GM12878 (cell line): ENCODE measurements at regions of chr1 and their contacts with region 1.

Region 1: GRCh38 chr1:236281654-236282424 is at the start of gene ERO1B:
- DNase-seq: peak; percentile 73
- ATAC-seq: peak; percentile 86
- H3K4me3 ChIP-seq: peak within 1 kb of the TSS; percentile 85
- H3K27ac ChIP-seq: peak within 1 kb of the TSS; percentile 88
- H3K4me1 ChIP-seq: peaks cover 33% of the 10 kb centered on the region
- H3K27me3 ChIP-seq: no peaks in the 10 kb centered on the region
- CTCF ChIP-seq: no peak
- EP300 ChIP-seq: no peak
- POLR2A ChIP-seq: peak; percentile 99
- RAD21 ChIP-seq: no peak
- polyA plus RNA-seq, gene ERO1B: 9.0 to 9.6 TPM

Region 2: GRCh38 chr1:236142253-236143103 is 139.4 kb before region 1 on chr1 and contains the start of gene GPR137B:
- CTCF ChIA-PET with region 1: interaction called, 5 read pairs
- POLR2A ChIA-PET with region 1: interaction called, 6 read pairs
- RAD21 ChIA-PET with region 1: interaction called, 3 read pairs
- SMC1A ChIA-PET with region 1: interaction called, 5 read pairs
- in situ Hi-C with region 1: no loop called
- intact Hi-C with region 1: loop called (anchors 5 kb)
- DNase-seq: no peak
- ATAC-seq: peak; percentile 61
- H3K4me3 ChIP-seq: peak within 1 kb of the TSS; percentile 84
- H3K27ac ChIP-seq: peak within 1 kb of the TSS; percentile 62
- H3K4me1 ChIP-seq: peaks cover 17% of the 10 kb centered on the region
- H3K27me3 ChIP-seq: peaks cover 1 to 13% of the 10 kb centered on the region in 2 experiments
- CTCF ChIP-seq: no peak
- EP300 ChIP-seq: no peak
- POLR2A ChIP-seq: peak; percentile 63
- RAD21 ChIP-seq: no peak
- polyA plus RNA-seq, gene GPR137B: 5.4 to 6.4 TPM

Region 3: DNA sequence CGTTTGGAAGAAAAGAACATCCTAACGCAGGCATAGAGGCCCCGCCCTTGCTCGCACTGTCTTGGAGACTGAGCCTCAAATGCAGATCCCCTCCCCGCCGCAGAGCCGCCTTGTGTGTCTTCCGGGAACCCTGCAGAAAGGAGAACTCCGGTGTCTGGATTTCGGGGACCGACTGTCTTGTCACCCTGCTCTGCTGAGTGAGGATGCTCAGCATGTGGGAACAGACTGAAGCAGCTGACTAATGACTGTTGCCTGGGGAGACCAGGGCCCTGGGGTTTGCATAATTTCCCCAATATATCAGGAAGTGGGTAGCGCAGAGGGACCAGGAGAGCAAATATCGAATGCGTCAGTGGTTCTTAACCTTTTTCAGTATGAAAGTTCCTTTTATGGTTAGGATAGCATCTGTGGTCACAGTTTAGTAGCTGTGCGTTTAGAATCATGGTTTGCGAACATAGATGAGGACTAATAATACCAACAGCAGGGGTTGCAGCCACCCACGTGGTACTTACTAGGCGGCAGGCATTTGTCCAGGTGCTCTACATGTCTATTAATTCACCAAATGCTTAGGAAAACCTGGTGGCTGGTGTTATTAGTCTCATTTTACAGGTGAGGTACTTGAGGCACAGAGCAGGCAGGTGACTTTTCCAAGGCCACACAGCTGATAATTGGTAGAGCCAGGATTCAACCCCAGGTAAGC is 125.2 kb before region 1 on chr1:
- CTCF ChIA-PET with region 1: interaction called, 5 read pairs
- POLR2A ChIA-PET with region 1: interaction called, 40 read pairs
- RAD21 ChIA-PET with region 1: interaction called, 21 read pairs
- SMC1A ChIA-PET with region 1: interaction called, 30 read pairs
- in situ Hi-C with region 1: no loop called
- intact Hi-C with region 1: loop called (anchors 1 kb)
- DNase-seq: peak; percentile 99
- ATAC-seq: peak; percentile 74
- H3K4me3 ChIP-seq: peak overlapping the region; percentile 46; the same call in 1 of the 2 replicates
- H3K27ac ChIP-seq: peak overlapping the region; percentile 99
- H3K4me1 ChIP-seq: peaks cover 61% of the 10 kb centered on the region
- H3K27me3 ChIP-seq: no peaks in the 10 kb centered on the region
- CTCF ChIP-seq: no peak
- EP300 ChIP-seq: peak; percentile 100
- POLR2A ChIP-seq: peak; percentile 67; the same call in 1 of the 2 replicates
- RAD21 ChIP-seq: 0 out of 2 replicates have a peak, but pooled peaks have one; percentile 4

Region 4: GRCh38 chr1:236303687-236304086 is 21.8 kb after region 1 on chr1:
- CTCF ChIA-PET with region 1: interaction called, 3 read pairs
- POLR2A ChIA-PET with region 1: no interaction called
- RAD21 ChIA-PET with region 1: interaction called, 11 read pairs
- SMC1A ChIA-PET with region 1: interaction called, 7 read pairs
- in situ Hi-C with region 1: no loop called
- intact Hi-C with region 1: no loop called
- DNase-seq: peak; percentile 30
- ATAC-seq: peak; percentile 95
- H3K4me3 ChIP-seq: no peak overlapping the region
- H3K27ac ChIP-seq: no peak overlapping the region
- H3K4me1 ChIP-seq: peaks cover 10% of the 10 kb centered on the region
- H3K27me3 ChIP-seq: no peaks in the 10 kb centered on the region
- CTCF ChIP-seq: peak; percentile 26 to 53 (median 50); a peak in 4 of 6 replicates
- EP300 ChIP-seq: no peak
- POLR2A ChIP-seq: no peak
- RAD21 ChIP-seq: peak; percentile 84

Region 5: DNA sequence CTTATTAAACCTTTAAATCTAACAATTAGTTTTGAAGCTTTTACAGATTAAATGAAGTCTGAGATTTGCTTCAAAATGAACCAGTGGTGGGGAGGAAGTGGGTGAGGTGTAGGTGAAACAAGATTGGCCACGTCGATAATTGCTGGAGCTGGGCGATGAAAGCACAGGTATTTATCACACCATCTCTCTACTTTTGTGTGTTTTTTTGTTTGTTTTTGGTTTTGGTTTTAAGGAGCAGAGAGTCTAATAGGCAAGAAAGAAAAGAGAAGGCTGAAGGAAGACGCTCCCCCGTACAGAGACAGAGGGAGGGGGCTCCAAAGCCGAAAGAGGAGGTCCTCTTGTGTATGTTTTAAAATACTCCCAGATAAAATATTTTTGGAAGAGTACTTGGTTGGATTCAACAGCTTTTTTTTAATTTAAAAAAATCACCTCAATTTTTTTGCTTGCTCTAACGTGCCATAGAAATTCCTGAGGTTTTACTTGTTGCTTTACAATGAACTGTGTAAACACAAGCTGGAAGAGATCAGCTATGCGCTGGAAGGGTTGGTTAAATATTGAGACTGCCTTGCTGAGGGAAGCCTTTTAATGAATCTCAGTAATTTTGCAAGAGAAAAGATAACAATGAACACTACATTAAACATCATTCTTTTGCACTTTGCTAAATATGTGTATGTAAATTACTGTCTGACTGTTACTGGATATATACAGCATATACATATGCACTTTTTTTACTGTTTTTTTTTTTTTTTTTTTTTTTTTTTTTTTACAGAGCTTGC is 235.3 kb after region 1 on chr1:
- CTCF ChIA-PET with region 1: no interaction called
- POLR2A ChIA-PET with region 1: no interaction called
- RAD21 ChIA-PET with region 1: no interaction called
- SMC1A ChIA-PET with region 1: no interaction called
- in situ Hi-C with region 1: no loop called
- intact Hi-C with region 1: no loop called
- DNase-seq: no peak
- ATAC-seq: peak; percentile 20; the same call in 1 of the 3 replicates
- H3K4me3 ChIP-seq: no peak overlapping the region
- H3K27ac ChIP-seq: no peak overlapping the region
- H3K4me1 ChIP-seq: no peaks in the 10 kb centered on the region
- H3K27me3 ChIP-seq: no peaks in the 10 kb centered on the region
- CTCF ChIP-seq: no peak
- EP300 ChIP-seq: no peak
- POLR2A ChIP-seq: no peak
- RAD21 ChIP-seq: no peak